ENCODE measurements at regions of chr1 and their contacts with region 1.

Region 1: DNA sequence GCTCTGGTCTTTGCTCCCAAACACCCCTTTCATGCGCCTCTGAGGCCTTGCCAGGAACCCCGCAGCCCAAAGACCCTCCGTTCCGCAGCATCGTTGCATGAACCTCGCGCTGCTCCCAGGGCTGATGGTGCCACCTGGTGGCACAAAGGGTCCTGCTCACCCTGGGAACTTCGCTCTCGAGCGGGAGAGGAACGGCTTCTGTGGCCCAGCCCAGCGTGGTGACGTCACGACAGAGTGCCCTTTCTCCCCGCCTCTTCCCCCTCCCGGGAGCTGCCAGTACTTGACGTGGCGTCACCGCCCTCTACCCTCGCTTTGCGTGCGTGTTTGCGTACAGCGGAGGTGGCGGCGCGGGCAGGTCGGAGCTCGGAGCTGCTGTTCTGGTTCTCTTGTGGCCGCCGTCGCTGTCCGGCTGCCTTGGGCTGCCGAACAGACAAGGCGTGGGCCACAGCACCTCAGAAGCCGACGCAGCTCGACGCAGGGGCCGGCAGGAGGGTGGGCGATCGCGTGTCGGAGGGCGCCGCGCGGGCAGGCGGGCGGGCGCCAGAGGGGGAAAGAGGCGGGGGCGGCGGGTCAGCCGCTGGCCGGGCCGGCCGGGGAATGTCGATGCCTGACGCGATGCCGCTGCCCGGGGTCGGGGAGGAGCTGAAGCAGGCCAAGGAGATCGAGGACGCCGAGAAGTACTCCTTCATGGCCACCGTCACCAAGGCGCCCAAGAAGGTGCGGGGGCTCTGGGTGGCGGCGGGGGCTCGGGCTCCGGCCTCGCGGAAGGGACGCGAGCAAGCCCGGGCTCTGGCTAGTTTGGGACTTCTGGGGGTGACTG is at the start of gene AHCYL1:
- DNase-seq: peak; percentile 99
- H3K4me3 ChIP-seq: peak within 1 kb of the TSS; percentile 75 to 77
- H3K27ac ChIP-seq: peak within 1 kb of the TSS; percentile 94 to 97
- H3K4me1 ChIP-seq: peaks cover 4 to 61% (median 35%) of the 10 kb centered on the region in 4 donors
- H3K27me3 ChIP-seq: no peaks in the 10 kb centered on the region
- CTCF ChIP-seq: peak; percentile 98 to 100

Region 2: GRCh38 chr1:109548321-109549267 is 436.1 kb before region 1 on chr1 and contains the start of gene GNAI3:
- intact Hi-C with region 1: loop called (anchors 10 kb)
- DNase-seq: peak; percentile 97 to 98
- H3K4me3 ChIP-seq: peak within 1 kb of the TSS; percentile 91 to 96
- H3K27ac ChIP-seq: peak within 1 kb of the TSS; percentile 94 to 96
- H3K4me1 ChIP-seq: peaks cover 0 to 53% (median 23%) of the 10 kb centered on the region in 4 donors
- H3K27me3 ChIP-seq: no peaks in the 10 kb centered on the region
- CTCF ChIP-seq: no peak

Region 3: DNA sequence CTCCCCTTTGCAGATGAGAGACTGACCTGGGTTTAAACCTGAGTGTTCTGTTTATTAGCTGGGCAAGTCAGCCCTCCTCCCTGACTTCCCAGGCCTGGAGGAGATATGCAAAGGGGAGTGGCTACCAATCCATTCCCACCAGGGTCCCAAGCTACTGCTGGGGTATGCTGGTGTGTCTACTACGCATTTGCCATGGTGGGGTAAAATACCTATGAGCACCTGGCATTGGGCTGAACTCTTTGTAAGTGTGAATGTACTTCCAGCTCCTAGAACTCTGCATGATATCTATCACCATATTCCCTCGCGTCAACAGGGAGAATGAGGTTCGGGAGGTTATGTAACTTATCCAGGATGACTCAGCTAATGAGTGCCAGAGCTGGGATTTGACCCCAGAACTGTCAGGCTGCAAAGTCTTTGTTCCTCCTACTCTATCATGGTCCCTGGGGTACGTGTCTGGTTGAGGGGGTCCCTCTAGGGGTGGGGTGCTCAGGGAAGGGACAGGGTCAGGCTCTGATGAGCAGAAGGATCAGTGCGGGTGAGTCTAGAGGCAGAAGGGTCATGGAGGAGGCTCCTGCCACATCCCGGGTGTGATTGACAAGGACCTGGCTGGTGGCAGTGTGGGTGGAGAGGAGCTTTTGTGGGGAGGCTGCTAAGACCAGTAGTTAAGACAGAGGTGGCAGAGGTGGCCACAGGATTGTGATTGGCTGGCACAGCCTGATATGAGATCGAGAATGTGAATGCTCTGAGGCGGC is 348.3 kb before region 1 on chr1:
- intact Hi-C with region 1: loop called (anchors 5 kb)
- DNase-seq: peak in 1 of 2 donors; percentile 44
- H3K4me3 ChIP-seq: no peak overlapping the region
- H3K27ac ChIP-seq: no peak overlapping the region
- H3K4me1 ChIP-seq: peaks cover 0 to 8% (median 0%) of the 10 kb centered on the region in 4 donors
- H3K27me3 ChIP-seq: no peaks in the 10 kb centered on the region
- CTCF ChIP-seq: no peak

Measured in tibial artery (tissue), 4 donors.